ENCODE measurements at regions of chr1 and their contacts with region 1.

Region 1: DNA sequence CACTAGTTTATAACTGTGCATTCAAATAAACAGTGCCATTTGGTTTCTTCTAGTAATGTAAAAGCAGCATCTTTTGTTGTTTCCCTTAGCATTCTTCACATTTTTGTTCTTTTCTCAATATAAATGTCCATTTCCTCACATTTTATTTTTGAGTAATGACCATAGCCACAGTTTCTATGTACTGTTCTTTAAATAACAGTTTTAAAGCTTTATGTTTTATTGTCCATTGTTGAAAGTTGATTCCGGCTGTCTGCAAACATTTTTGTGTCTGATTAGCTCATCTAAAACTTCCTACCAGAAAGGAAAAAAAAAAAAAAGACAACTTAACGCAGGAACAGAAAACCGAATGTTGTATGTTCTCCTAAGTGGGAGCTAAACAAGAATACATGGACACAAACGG is 139.7 kb downstream of the MAGI3 start:
- DNase-seq: no peak
- ATAC-seq: no peak
- H3K4me3 ChIP-seq: no peak overlapping the region
- H3K4me3 Mint-ChIP-seq: no peak overlapping the region
- H3K27ac ChIP-seq: no peak overlapping the region
- H3K27ac Mint-ChIP-seq: no peak overlapping the region
- H3K4me1 ChIP-seq: no peaks in the 10 kb centered on the region
- H3K4me1 Mint-ChIP-seq: no peaks in the 10 kb centered on the region
- H3K27me3 ChIP-seq: no peaks in the 10 kb centered on the region
- H3K27me3 Mint-ChIP-seq: peaks cover 0 to 4% of the 10 kb centered on the region in 2 donors

Region 2: DNA sequence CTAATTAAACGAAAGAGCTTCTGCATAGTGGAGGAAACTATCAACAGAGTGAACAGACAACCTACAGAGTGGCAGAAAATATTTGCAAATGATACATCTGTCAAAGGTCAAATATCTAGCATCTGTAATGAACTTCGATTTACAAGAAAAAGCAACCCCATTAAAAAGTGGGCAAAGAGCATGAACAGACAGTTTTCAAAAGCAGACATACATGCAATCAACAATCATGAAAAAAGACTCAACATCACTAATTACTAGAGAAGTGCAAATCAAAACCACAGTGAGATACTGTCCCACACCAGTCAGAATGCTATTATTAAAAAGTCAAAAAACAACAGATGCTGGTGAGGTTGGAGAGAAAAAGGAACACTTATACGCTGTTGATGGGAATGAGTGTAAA is 36.5 kb before region 1 on chr1:
- CTCF ChIA-PET with region 1: no interaction called
- POLR2A ChIA-PET with region 1: no interaction called
- DNase-seq: no peak
- ATAC-seq: no peak
- H3K4me3 ChIP-seq: no peak overlapping the region
- H3K4me3 Mint-ChIP-seq: no peak overlapping the region
- H3K27ac ChIP-seq: no peak overlapping the region
- H3K27ac Mint-ChIP-seq: no peak overlapping the region
- H3K4me1 ChIP-seq: no peaks in the 10 kb centered on the region
- H3K4me1 Mint-ChIP-seq: no peaks in the 10 kb centered on the region
- H3K27me3 ChIP-seq: peaks cover 0 to 5% of the 10 kb centered on the region in 2 experiments
- H3K27me3 Mint-ChIP-seq: no peaks in the 10 kb centered on the region

Region 3: GRCh38 chr1:113616156-113616555 is 86.1 kb after region 1 on chr1:
- CTCF ChIA-PET with region 1: no interaction called
- POLR2A ChIA-PET with region 1: interaction called in 1 of 2 experiments, 10 read pairs
- DNase-seq: no peak
- ATAC-seq: no peak
- H3K4me3 ChIP-seq: no peak overlapping the region
- H3K4me3 Mint-ChIP-seq: no peak overlapping the region
- H3K27ac ChIP-seq: no peak overlapping the region
- H3K27ac Mint-ChIP-seq: no peak overlapping the region
- H3K4me1 ChIP-seq: no peaks in the 10 kb centered on the region
- H3K4me1 Mint-ChIP-seq: no peaks in the 10 kb centered on the region
- H3K27me3 ChIP-seq: no peaks in the 10 kb centered on the region
- H3K27me3 Mint-ChIP-seq: no peaks in the 10 kb centered on the region

Measured in T-cell (primary cell).